ENCODE measurements at regions of chr9 and their contacts with region 1.

Region 1: DNA sequence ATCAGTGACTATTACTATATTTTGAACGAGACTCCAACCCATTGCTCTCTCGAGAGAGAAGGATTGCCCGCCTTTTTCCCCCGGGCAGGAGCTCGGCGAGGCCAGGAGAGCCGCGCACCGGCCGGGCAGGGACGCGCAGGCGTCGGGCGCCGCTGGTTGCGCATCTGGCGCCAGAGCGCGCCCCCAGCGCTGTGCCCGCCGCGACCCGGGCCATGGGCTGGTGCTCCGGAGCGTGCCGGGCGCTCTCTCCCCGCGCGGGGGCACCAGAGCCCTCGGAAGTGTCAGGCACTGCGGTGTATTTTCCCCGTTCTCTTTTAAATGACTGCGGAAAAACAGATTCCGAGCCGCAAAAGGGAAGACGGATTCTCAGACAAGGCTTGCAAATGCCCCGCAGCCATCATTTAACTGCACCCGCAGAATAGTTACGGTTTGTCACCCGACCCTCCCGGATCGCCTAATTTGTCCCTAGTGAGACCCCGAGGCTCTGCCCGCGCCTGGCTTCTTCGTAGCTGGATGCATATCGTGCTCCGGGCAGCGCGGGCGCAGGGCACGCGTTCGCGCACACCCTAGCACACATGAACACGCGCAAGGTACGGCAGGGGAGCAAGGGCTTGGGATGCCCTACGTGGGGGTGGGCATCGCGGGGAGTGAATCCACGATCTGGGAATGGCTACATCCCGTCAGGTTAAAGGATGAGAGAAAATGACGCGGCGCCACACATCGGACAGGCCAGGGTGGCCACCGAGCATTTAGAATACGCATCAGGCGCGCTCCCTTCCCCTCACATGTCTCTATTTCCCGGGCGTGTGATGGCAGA is 1.1 kb upstream of the NTRK2 start:
- DNase-seq: peak; percentile 79 to 93 (median 92)
- ATAC-seq: peak; percentile 88 to 89
- H3K4me3 ChIP-seq: peak overlapping the region; percentile 55
- H3K27ac ChIP-seq: no peak overlapping the region
- H3K4me1 ChIP-seq: no peaks in the 10 kb centered on the region
- H3K27me3 ChIP-seq: no peaks in the 10 kb centered on the region

Region 2: GRCh38 chr9:84404095-84404686 is 264.2 kb before region 1 on chr9:
- intact Hi-C with region 1: loop called in 1 of 4 experiments (anchors 10 kb)
- DNase-seq: no peak
- ATAC-seq: peak in 1 of 2 donors; percentile 26
- H3K4me3 ChIP-seq: no peak overlapping the region
- H3K27ac ChIP-seq: no peak overlapping the region
- H3K4me1 ChIP-seq: no peaks in the 10 kb centered on the region
- H3K27me3 ChIP-seq: no peaks in the 10 kb centered on the region

Region 3: GRCh38 chr9:84953797-84954705 is 285.6 kb after region 1 on chr9:
- intact Hi-C with region 1: loop called in 1 of 4 experiments (anchors 10 kb)
- DNase-seq: peak; percentile 80 to 92 (median 91)
- ATAC-seq: peak; percentile 90 to 93
- H3K4me3 ChIP-seq: no peak overlapping the region
- H3K27ac ChIP-seq: no peak overlapping the region
- H3K4me1 ChIP-seq: peaks cover 2% of the 10 kb centered on the region
- H3K27me3 ChIP-seq: no peaks in the 10 kb centered on the region

Region 4: DNA sequence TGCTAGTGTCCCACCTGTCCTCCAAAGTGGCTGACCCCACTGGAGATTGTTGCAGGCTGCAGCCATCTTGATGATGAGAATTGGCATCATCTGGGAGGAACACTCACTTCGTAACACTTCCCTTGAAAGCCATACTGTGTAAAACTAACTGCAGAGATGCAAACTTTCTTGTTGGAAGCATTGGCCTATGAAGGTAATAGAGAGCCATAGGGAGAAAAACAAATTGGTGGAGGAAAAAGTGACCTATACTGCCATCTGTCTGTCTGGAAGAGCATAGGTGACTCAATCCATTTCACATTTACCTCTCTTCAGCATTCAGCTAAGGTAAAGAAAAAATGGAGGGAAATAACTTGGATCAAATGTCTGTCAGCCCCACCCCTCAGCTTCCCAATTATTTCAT is 474.6 kb after region 1 on chr9:
- intact Hi-C with region 1: loop called in 1 of 4 experiments (anchors 10 kb)
- DNase-seq: no peak
- ATAC-seq: peak in 1 of 2 donors; percentile 26
- H3K4me3 ChIP-seq: no peak overlapping the region
- H3K27ac ChIP-seq: no peak overlapping the region
- H3K4me1 ChIP-seq: no peaks in the 10 kb centered on the region
- H3K27me3 ChIP-seq: no peaks in the 10 kb centered on the region

Region 5: DNA sequence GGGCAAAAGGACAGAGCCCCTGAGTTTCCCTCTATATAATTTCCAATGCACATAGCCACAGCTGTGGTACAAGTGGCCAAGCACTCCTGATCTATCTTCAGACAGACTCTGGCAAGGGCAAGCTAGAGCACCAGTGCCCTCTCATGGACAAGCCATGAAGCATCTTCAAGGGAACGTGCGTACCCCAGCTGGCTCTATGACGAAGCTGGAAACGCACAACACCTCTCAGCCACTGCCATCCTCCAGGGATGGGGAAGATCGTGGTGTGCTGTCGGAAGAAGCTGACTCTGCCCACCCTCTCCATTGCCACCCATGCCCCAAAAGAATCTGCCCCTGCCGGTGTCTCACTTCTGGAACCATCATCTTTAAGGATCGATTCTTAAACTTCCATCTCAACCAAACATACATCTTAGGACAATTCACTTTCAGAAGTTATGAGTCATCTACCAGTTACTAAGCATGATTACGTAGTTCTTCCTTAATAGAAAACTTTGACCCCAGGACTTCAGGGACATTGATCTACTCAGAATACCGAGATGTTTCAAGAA is 590.5 kb after region 1 on chr9:
- intact Hi-C with region 1: loop called in 1 of 4 experiments (anchors 5 kb)
- DNase-seq: peak; percentile 53 to 74 (median 72)
- ATAC-seq: peak; percentile 83 to 88
- H3K4me3 ChIP-seq: no peak overlapping the region
- H3K27ac ChIP-seq: no peak overlapping the region
- H3K4me1 ChIP-seq: no peaks in the 10 kb centered on the region
- H3K27me3 ChIP-seq: no peaks in the 10 kb centered on the region